Mammary epithelial cell (primary cell): ENCODE measurements at regions of chr5 and their contacts with region 1.

Region 1: GRCh38 chr5:135332519-135333150 is 66.4 kb downstream of the MACROH2A1 start:
- DNase-seq: peak; percentile 36
- H3K4me3 ChIP-seq: no peak overlapping the region
- H3K27ac ChIP-seq: no peak overlapping the region
- H3K4me1 ChIP-seq: peaks cover 12% of the 10 kb centered on the region
- H3K27me3 ChIP-seq: no peaks in the 10 kb centered on the region
- CTCF ChIP-seq: peak; percentile 36 to 59

Region 2: GRCh38 chr5:135191084-135191826 is 141.4 kb before region 1 on chr5:
- CTCF ChIA-PET with region 1: no interaction called
- dilution Hi-C with region 1: no loop called
- in situ Hi-C with region 1: no loop called
- intact Hi-C with region 1: loop called (anchors 1 kb)
- DNase-seq: peak; percentile 63
- H3K4me3 ChIP-seq: peak overlapping the region in 2 of 3 experiments; percentile 35 to 54
- H3K27ac ChIP-seq: no peak overlapping the region
- H3K4me1 ChIP-seq: peaks cover 6% of the 10 kb centered on the region
- H3K27me3 ChIP-seq: no peaks in the 10 kb centered on the region
- CTCF ChIP-seq: peak; percentile 94 to 98

Region 3: DNA sequence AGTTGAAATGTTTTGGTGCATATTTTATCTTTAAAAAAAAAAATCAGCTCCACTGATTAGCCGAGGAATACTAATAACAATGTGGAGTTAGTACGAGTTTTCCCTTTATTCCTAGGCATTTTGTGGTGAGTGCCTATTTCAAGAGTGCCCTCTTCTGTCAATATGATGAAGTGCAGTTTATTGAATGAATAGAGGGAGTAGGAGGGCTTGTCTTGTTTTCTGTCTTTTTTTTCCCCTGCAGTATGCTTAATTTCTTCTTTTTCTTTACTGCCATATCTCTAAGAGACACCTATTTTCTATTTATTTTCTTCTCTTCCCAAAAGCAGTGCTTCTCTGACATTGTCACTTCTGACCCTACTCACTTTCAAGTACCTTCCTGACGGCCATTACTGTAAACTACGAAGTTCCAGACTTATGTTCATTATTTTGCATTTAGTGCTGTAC is 129.0 kb before region 1 on chr5:
- CTCF ChIA-PET with region 1: no interaction called
- dilution Hi-C with region 1: no loop called
- in situ Hi-C with region 1: no loop called
- intact Hi-C with region 1: loop called (anchors 2 kb)
- DNase-seq: no peak
- H3K4me3 ChIP-seq: no peak overlapping the region
- H3K27ac ChIP-seq: no peak overlapping the region
- H3K4me1 ChIP-seq: peaks cover under 1% of the 10 kb centered on the region
- H3K27me3 ChIP-seq: no peaks in the 10 kb centered on the region
- CTCF ChIP-seq: peak; percentile 50 to 53

Region 4: DNA sequence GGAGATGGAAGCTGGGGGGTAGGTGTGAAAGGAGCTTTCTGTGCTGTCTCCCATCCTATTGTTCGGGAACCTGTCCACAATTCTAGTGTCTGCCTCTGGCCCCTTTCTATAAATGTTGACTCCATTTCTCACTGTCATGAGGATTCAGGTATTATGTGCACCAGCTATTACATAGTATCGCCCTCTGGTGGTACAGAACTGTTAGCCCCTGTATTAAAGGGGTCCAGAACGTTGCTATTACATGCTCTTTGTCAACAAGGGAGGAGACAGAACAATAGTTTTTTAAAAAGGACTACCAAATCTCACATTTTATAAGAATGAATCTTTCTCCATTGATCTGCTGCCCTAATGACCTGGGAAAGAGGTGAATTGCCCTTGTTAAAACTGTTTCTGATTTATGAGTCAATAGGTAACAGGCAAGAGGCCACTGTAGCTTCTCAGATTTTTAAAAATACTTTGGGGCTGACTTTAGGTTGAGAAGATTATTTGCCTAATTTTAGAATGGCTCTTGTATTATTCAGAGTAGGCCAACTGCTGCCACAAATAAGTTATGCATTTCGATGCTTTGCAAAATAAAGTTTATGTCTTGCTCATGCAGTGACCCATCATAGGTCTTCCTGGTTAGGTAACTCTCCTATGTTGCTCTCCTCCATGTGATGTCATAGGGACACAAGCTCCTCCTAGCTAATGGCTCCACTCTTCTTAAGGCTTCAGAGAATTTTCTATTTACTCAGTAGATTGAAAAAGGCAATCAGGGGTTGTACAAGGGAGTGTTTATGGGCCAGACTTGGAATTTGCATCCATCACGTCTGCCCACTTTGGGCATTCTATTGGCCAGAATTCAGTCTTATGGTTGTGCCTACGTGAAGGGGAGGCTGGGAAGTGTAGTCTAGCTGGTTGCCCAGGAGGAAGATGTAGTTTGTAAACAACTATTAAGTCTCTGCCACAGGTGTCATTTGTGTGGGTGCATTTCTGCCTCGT is 93.8 kb after region 1 on chr5:
- CTCF ChIA-PET with region 1: no interaction called
- dilution Hi-C with region 1: no loop called
- in situ Hi-C with region 1: no loop called
- intact Hi-C with region 1: loop called (anchors 2 kb)
- DNase-seq: peak; percentile 49
- H3K4me3 ChIP-seq: no peak overlapping the region
- H3K27ac ChIP-seq: no peak overlapping the region
- H3K4me1 ChIP-seq: no peaks in the 10 kb centered on the region
- H3K27me3 ChIP-seq: no peaks in the 10 kb centered on the region
- CTCF ChIP-seq: peak; percentile 86 to 89

Region 5: GRCh38 chr5:135476615-135477582 is 144.3 kb after region 1 on chr5:
- CTCF ChIA-PET with region 1: no interaction called
- dilution Hi-C with region 1: no loop called
- in situ Hi-C with region 1: no loop called
- intact Hi-C with region 1: no loop called
- DNase-seq: no peak
- H3K4me3 ChIP-seq: no peak overlapping the region
- H3K27ac ChIP-seq: no peak overlapping the region
- H3K4me1 ChIP-seq: no peaks in the 10 kb centered on the region
- H3K27me3 ChIP-seq: no peaks in the 10 kb centered on the region
- CTCF ChIP-seq: no peak